Mammary epithelial cell (primary cell): ENCODE measurements at regions of chr6 and their contacts with region 1.

Region 1: DNA sequence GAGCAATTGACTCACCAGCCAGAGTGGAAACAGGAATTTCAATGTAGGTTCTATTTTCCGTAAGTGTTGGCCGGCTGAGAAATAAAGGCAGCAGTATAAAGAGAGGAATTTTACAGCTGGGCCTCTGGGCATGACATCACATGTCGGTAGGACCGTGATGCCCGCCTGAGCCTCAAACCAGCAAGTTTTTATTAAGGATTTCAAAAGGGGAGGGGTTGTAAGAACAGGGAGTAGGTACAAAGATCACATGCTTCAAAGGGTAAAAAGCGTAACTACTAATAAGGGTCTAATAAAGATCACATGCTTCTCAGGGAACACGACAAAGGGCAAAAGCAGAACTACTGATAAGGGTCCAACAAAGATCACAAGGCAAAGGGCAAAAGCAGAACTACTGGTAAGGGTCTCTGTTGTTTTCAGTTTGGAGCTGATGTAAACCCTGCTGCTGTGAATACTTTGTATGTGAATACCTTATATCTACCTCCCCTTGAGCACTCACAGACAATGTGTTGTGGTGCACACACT is 9.0 kb upstream of the TULP4 start:
- DNase-seq: peak; percentile 49
- H3K4me3 ChIP-seq: no peak overlapping the region
- H3K27ac ChIP-seq: no peak overlapping the region
- H3K4me1 ChIP-seq: peaks cover 33% of the 10 kb centered on the region
- H3K27me3 ChIP-seq: no peaks in the 10 kb centered on the region
- CTCF ChIP-seq: no peak

Region 2: DNA sequence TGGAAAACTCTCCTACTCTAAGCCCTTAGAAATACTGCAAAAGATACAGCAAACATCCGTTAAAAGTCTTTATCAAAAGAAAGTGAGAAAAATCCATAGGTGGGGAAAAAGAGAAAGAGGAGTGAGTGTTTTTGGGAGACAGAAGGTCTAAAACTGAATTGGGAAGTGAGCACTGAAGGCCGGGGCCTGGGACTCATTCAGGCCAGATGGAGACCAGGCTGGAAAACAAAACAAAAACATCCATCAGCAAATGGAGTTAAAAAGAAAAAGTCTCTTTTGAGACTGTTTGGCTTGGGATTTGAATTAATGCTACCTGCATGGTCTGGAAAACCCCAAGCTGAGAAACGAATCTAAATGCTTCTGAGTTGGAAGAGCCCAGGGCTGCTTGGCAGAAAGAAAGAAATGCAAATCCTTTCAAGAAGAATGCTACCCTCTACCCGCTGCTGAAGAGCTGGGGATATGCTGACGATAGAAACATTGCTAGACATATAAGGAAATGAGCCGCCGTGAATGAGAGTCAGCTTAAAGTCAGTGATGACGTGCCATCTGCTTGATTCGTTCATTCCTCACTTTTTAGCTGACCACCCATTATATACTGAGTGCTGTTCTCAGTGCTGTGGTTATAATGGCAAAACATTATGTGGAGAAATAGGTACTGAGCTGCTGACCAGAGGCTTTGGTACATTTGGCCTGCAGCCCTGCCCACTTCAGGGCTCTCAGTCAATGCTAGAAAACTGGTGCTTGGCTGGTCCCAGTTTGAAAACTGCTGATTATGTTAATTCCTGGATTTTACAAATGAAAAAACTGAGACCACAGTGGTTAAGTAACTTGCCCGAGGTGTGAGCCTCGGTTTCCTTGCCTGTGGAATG is 19.0 kb before region 1 on chr6:
- CTCF ChIA-PET with region 1: no interaction called
- dilution Hi-C with region 1: no loop called
- in situ Hi-C with region 1: no loop called
- intact Hi-C with region 1: loop called (anchors 2 kb)
- DNase-seq: peak; percentile 9
- H3K4me3 ChIP-seq: no peak overlapping the region
- H3K27ac ChIP-seq: no peak overlapping the region
- H3K4me1 ChIP-seq: peaks cover 22% of the 10 kb centered on the region
- H3K27me3 ChIP-seq: no peaks in the 10 kb centered on the region
- CTCF ChIP-seq: no peak